ENCODE measurements at regions of chr6 and their contacts with region 1.

Region 1: DNA sequence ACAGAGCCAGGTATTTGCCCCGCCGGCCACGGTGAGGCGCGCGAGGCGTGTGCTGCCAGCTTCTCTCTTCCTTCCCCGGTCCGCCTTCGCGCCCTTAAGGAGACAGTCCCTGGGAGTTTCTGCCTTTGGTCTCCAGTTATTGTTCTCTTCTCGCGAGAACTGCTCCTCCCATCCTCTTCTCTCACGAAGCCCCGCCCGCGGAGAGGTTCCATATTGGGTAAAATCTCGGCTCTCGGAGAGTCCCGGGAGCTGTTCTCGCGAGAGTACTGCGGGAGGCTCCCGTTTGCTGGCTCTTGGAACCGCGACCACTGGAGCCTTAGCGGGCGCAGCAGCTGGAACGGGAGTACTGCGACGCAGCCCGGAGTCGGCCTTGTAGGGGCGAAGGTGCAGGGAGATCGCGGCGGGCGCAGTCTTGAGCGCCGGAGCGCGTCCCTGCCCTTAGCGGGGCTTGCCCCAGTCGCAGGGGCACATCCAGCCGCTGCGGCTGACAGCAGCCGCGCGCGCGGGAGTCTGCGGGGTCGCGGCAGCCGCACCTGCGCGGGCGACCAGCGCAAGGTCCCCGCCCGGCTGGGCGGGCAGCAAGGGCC is at the start of gene MAPK14:
- DNase-seq: peak; percentile 99
- ATAC-seq: peak; percentile 92
- H3K4me3 Mint-ChIP-seq: peak within 1 kb of the TSS; percentile 98
- H3K27ac Mint-ChIP-seq: peak within 1 kb of the TSS; percentile 98
- H3K4me1 Mint-ChIP-seq: peaks cover 38% of the 10 kb centered on the region
- H3K27me3 Mint-ChIP-seq: peaks cover 19% of the 10 kb centered on the region
- total RNA-seq, gene MAPK14: 39.1 to 44.0 TPM

Region 2: GRCh38 chr6:35920793-35921732 is 106.5 kb before region 1 on chr6 and contains the start of gene SRPK1:
- CTCF ChIA-PET with region 1: no interaction called
- POLR2A ChIA-PET with region 1: no interaction called
- intact Hi-C with region 1: loop called (anchors 1 to 2 kb)
- DNase-seq: peak; percentile 94
- ATAC-seq: peak; percentile 80
- H3K4me3 Mint-ChIP-seq: peak within 1 kb of the TSS; percentile 95
- H3K27ac Mint-ChIP-seq: peak within 1 kb of the TSS; percentile 97
- H3K4me1 Mint-ChIP-seq: peaks cover 45% of the 10 kb centered on the region
- H3K27me3 Mint-ChIP-seq: no peaks in the 10 kb centered on the region
- total RNA-seq, gene SRPK1: 100 to 118 TPM

Region 3: GRCh38 chr6:36094753-36095496 is 67.3 kb after region 1 on chr6:
- CTCF ChIA-PET with region 1: interaction called, 183 read pairs
- POLR2A ChIA-PET with region 1: interaction called, 8 read pairs
- intact Hi-C with region 1: loop called (anchors 1 kb)
- DNase-seq: peak; percentile 92
- ATAC-seq: peak; percentile 87
- H3K4me3 Mint-ChIP-seq: no peak overlapping the region
- H3K27ac Mint-ChIP-seq: peak overlapping the region; percentile 35
- H3K4me1 Mint-ChIP-seq: peaks cover 39% of the 10 kb centered on the region
- H3K27me3 Mint-ChIP-seq: no peaks in the 10 kb centered on the region

Region 4: DNA sequence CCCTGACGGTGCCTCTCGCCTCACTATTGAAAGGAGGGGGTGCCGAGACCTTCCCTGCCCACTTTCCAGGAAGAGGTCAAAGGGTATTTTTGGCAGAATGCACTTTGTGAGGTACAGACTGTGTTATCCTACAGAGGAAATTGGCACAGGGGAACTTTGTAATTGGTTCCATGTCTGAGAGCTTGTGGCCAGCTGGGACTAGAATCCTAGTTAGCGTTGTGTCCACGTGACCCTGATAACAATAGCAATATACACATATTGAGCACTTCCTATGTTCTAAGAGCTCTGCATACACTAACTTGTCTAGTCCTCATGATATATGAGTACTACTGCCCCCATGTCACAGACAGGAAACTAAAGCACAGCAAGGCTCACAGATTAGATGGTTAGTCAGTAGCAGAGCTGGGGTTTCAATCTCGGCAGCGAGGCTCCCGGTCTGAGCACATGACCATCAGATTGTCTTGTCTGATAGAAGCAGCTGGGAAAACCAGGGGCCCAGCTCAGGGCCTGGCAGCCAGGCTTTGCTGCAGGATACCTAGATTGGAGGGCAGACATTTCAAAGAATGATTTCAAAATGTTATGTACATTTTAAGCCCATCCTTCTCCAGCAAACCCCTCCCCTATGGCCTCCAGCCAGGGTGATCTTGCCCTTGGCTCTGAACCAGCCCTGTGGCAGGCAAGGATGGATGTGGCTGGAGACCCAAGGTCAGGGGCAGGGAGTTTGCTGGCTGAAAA is 104.1 kb after region 1 on chr6:
- CTCF ChIA-PET with region 1: interaction called, 9 read pairs
- POLR2A ChIA-PET with region 1: interaction called, 18 read pairs
- intact Hi-C with region 1: loop called in 1 of 2 experiments (anchors 1 kb)
- DNase-seq: peak; percentile 80
- ATAC-seq: peak; percentile 84
- H3K4me3 Mint-ChIP-seq: peak overlapping the region; percentile 84
- H3K27ac Mint-ChIP-seq: peak overlapping the region; percentile 96
- H3K4me1 Mint-ChIP-seq: peaks cover 55% of the 10 kb centered on the region
- H3K27me3 Mint-ChIP-seq: no peaks in the 10 kb centered on the region

Region 5: DNA sequence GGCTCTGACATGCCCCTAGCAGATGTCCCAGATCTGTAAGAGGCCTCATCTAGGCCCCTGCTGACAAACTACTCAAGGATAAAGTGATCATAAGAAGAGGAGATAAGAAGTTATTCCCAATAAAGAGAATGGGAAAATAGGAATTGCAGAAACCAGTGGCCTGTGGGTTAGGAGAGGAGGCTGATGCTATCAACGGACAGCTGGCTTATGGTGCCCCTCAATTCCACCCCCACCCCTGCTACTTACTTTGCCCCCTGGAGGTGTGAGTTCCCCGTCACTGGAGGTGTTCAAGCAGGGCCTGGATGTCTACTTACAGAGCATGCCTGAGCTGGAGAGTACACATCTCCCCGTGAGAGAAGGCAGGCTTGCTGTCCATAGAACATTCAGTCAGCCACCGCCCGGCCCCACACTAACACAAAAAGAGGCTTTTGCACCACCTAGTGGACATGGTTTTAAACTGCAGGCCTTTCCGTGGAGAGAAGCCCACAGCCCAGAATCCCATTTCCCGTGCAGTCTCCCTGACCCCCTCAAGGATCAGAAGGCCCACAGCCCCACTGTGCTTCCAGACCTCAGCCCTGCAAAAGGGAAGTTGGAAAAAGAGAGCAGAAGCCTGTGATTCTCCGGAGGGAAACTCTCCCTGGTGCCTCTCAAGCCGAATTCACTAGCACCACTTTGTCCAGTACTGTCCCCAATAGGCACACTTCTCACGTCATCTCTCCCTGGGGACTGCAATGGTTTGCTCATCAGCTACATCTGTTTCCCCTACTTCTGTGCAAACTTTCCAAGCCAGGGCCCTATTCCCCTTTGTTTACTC is 332.9 kb after region 1 on chr6:
- CTCF ChIA-PET with region 1: interaction called, 3 read pairs
- POLR2A ChIA-PET with region 1: no interaction called
- intact Hi-C with region 1: loop called (anchors 1 to 5 kb)
- DNase-seq: peak; percentile 85
- ATAC-seq: peak; percentile 81
- H3K4me3 Mint-ChIP-seq: no peak overlapping the region
- H3K27ac Mint-ChIP-seq: no peak overlapping the region
- H3K4me1 Mint-ChIP-seq: peaks cover 22% of the 10 kb centered on the region
- H3K27me3 Mint-ChIP-seq: peaks cover 6% of the 10 kb centered on the region

Region 6: GRCh38 chr6:36546920-36547645 is 519.5 kb after region 1 on chr6 and contains the start of gene STK38:
- CTCF ChIA-PET with region 1: no interaction called
- POLR2A ChIA-PET with region 1: no interaction called
- intact Hi-C with region 1: loop called in 1 of 2 experiments (anchors 2 kb)
- DNase-seq: peak; percentile 97
- ATAC-seq: peak; percentile 90
- H3K4me3 Mint-ChIP-seq: peak within 1 kb of the TSS; percentile 94
- H3K27ac Mint-ChIP-seq: peak within 1 kb of the TSS; percentile 97
- H3K4me1 Mint-ChIP-seq: peaks cover 36% of the 10 kb centered on the region
- H3K27me3 Mint-ChIP-seq: no peaks in the 10 kb centered on the region
- total RNA-seq, gene STK38: 24.0 to 27.0 TPM